Astrocyte of the cerebellum (primary cell): ENCODE measurements at regions of chr13 and their contacts with region 1.

Region 1: DNA sequence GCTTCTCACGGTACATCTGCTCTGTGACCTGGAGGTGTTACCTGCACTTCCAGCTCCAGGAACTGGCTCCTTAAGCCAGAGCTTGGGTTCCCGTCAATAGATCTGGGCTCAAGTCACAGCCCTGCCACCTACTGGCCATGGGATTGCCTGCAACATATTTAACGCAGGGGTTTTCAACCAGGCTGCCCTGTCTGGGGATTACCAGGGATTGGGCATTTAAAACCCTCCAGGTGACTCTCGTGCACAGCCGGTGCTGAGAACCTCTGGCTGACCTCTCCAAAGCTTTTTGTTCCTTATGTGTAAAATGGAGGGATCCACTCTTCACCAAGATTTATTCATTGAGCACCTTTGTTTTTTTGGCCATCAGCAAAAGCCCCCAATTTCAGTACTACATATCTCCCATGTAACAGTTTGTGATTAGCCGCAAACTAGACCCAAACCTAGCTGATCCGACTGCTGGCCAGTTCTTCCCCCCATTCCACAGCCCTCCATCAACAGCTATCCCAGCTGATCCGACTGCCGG is 76.6 kb upstream of the STK24 start:
- DNase-seq: peak; percentile 57
- H3K4me3 ChIP-seq: no peak overlapping the region
- CTCF ChIP-seq: peak; percentile 91

Region 2: DNA sequence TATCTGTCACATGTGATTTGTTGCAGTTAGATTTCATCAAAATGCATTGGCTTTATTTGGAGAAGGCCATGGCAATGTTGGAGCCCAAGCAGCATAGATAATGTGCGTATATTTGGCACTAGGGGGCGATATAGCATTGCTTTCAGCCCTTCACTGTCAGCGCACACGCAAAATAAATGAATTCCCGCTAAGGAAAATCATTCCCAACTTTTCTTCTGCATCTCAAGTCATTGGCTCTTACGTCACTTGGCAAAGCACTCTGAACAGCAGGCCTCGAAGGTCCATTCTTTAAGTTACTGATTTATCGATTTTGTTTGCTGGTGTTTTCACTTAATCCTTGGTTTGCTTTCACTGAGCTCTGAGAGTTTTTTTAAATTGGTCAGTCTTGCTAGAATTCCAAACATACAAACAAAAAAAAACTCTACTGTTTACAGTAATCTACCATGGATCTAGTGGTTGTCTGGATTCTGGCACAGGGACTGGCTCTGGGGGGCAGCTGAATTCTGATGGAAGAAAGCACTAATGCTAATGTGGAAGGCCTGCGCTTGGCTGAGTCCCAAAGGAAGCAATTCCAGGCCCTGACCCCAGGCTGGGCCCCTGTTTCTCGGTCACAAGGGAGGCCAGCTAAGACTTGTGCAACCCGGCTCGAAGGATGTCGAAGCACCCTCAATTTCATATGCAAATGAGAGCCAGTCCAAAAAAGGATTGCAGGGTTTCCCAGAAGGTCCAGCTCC is 797.8 kb before region 1 on chr13:
- in situ Hi-C with region 1: loop called (anchors 25 kb)
- DNase-seq: peak; percentile 76
- H3K4me3 ChIP-seq: no peak overlapping the region
- CTCF ChIP-seq: peak; percentile 85

Region 3: DNA sequence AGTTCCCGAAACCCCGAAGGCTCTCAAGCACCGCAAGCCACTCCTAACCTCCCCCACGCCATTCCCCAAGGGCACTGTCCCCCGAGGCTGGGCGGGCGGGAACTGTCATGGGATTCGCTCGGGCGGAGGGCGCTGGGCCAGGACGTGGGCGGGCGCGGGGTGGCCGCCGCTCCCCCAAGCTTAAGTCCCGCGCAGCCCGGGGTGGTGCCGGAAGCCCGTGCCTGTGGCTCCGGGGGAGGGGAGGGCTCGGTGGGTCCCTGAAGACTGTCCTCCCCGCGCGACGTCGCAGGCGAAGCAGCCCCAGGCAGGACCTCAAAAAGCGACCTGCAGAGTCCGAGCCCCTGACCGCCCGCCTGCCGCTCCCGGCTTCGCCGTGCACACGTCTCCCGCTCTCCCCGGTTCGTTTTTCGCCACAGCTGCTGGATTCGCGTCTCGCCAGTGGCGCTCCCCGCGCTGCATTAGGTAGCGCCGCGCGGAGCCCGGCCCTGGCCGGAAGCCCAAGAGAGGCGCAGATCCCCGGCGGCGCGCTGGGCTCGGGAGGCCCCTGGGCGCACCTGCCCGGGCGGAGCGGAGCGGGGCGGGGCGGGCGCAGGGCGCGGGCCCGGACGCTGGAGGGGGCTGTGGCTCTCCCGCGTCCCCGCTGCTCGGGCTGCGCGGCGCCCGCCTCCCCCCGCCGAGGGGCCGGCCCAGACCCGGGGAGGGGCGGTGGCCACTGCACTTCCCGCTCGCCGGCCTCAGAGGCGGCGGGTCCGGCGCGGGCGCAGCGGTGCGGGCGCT is 511.0 kb before region 1 on chr13 and contains the start of gene FARP1:
- in situ Hi-C with region 1: loop called (anchors 25 kb)
- DNase-seq: no peak
- H3K4me3 ChIP-seq: peak within 1 kb of the TSS; percentile 70
- CTCF ChIP-seq: no peak

Region 4: DNA sequence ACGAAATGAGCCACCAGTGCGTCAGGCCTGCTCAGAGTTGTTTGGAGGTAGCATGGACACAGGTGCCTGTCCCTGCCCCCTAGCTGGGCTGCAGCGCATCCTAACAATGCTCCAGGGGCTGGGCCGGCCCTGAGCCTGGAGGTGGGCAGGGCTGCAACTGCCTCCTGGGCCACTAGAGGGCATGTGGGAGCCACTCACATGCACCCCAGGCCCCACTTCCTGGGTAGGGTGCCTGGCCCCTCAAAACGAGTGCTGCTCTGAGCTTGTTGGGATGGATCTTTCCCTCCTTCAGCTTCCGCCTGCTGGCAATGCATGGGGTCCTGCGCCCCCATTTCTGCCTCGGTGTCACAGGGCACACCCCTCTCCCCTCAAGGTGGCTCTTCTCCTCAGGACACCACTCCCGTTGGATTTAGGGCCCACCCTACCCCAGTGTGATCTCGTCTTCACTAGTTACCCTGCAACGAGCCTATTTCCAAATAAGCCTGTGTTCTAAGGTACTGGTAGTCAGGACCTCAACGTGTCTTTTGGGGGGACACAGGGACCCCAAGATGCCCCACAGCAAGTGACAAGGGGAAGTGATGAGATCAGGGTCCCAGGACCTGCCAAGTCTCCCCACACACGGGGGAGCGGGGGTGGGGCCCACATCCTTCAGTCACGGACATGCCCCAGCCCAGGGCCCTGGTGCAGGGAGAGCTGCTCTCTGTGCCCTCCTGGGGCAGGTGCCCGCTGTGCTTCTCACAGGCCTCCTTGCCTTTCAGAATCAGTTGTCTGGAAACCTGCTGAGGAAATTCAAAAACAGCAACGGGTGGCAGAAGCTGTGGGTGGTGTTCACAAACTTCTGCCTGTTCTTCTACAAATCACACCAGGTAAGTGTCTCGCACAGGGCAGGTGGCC is 207.9 kb before region 1 on chr13:
- in situ Hi-C with region 1: loop called (anchors 25 kb)
- DNase-seq: peak; percentile 22
- H3K4me3 ChIP-seq: no peak overlapping the region
- CTCF ChIP-seq: peak; percentile 97

Region 5: DNA sequence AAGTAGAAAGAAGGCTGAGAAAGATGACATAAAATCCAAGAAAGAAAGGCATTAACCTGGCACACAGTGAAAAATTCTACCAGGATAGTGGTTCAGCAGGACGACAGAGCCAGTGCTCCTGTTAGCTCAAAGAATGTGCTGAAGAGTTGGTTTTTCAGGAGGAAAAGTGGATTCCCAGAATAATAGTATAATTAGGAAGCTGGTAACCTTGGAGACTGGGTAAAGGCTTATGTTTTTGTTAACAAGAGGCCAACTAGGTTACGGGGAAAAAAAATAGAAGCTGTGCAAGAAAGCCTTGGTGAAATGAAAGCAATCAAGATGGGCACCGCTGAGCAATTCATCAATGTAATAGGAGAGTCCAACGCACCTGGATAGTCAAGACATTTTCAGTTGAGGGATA is 44.3 kb after region 1 on chr13:
- in situ Hi-C with region 1: no loop called
- DNase-seq: no peak
- H3K4me3 ChIP-seq: no peak overlapping the region
- CTCF ChIP-seq: no peak